ENCODE measurements at regions of chr13 and their contacts with region 1.

Region 1: DNA sequence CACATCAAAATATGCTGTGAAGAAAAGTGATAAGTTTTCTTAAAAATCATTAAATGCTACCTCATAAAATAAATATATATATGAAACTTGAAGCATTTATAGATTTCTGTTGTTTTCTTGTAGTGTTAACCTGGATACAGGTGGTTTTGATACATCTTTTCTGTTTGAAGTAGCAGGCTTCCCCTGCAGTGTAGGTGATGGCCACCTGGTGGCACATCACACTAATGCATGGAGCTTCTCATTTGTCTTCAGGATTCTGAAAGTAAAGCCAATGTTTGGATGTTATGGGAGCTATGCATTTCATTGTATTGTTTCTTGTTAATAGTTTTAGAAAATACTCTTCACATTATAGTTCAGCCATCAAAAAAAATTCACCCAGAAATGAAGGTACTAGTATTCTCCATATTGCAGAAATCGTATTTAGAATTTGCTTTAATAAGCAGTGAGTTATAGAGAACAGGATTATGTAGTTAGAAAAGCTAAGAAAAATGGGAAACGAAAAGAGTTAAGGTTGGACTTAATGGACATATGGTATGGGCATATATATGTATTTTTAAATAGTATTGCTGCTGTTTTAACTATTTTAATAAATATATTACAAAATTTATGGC is 18.7 kb downstream of the GPR180 start:
- DNase-seq: peak; percentile 15
- ATAC-seq: peak; percentile 84
- H3K4me3 ChIP-seq: no peak overlapping the region
- H3K27ac ChIP-seq: no peak overlapping the region
- H3K4me1 ChIP-seq: no peaks in the 10 kb centered on the region
- H3K27me3 ChIP-seq: no peaks in the 10 kb centered on the region
- CTCF ChIP-seq: peak; percentile 41 to 79 (median 76); a peak in 5 of 6 replicates
- POLR2A ChIP-seq: no peak
- RAD21 ChIP-seq: peak; percentile 51

Region 2: GRCh38 chr13:93867481-93867880 is 752.9 kb before region 1 on chr13:
- CTCF ChIA-PET with region 1: no interaction called
- POLR2A ChIA-PET with region 1: no interaction called
- RAD21 ChIA-PET with region 1: no interaction called
- intact Hi-C with region 1: loop called (anchors 5 kb)
- DNase-seq: no peak
- ATAC-seq: no peak
- H3K4me3 ChIP-seq: no peak overlapping the region
- H3K27ac ChIP-seq: no peak overlapping the region
- H3K4me1 ChIP-seq: no peaks in the 10 kb centered on the region
- H3K27me3 ChIP-seq: no peaks in the 10 kb centered on the region
- CTCF ChIP-seq: no peak
- POLR2A ChIP-seq: no peak
- RAD21 ChIP-seq: no peak

Region 3: DNA sequence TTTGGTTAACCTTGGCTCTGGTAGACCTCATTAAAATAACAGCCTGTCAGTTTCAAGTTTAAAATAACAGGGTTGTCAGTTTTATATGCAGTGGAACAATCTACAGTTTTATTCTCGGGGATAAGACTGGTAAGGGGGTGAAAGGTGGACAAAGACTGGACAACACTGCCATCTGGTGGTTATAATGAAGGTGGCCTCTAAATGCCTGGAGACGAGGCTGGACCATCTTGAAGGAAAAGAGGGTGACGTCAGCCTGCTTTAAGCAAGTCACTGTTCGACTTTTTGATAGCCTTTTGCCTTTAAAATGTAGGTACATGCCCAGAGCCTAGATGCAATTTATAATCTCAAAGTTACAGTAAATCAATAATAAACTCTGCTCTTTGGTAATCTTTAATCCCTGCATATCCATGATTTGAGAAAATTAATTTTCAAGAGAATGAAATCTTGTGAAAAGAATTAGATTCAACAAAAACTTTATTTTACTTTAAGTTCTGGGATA is 257.9 kb before region 1 on chr13:
- CTCF ChIA-PET with region 1: interaction called, 7 read pairs
- POLR2A ChIA-PET with region 1: no interaction called
- RAD21 ChIA-PET with region 1: no interaction called
- intact Hi-C with region 1: loop called (anchors 2 kb)
- DNase-seq: peak; percentile 68
- ATAC-seq: peak; percentile 98
- H3K4me3 ChIP-seq: no peak overlapping the region
- H3K27ac ChIP-seq: no peak overlapping the region
- H3K4me1 ChIP-seq: no peaks in the 10 kb centered on the region
- H3K27me3 ChIP-seq: no peaks in the 10 kb centered on the region
- CTCF ChIP-seq: peak in 2 of 3 experiments; percentile 69 to 83; a peak in 4 of 6 replicates
- POLR2A ChIP-seq: no peak
- RAD21 ChIP-seq: peak; percentile 68

Region 4: GRCh38 chr13:94416454-94417080 is 203.8 kb before region 1 on chr13:
- CTCF ChIA-PET with region 1: interaction called, 10 read pairs
- POLR2A ChIA-PET with region 1: interaction called, 3 read pairs
- RAD21 ChIA-PET with region 1: no interaction called
- intact Hi-C with region 1: no loop called
- DNase-seq: peak; percentile 51
- ATAC-seq: peak; percentile 93
- H3K4me3 ChIP-seq: no peak overlapping the region
- H3K27ac ChIP-seq: no peak overlapping the region
- H3K4me1 ChIP-seq: no peaks in the 10 kb centered on the region
- H3K27me3 ChIP-seq: 0 out of 2 replicates have a peak, but pooled peaks cover 4% of the 10 kb centered on the region
- CTCF ChIP-seq: peak; percentile 17 to 82 (median 72); a peak in 5 of 6 replicates
- POLR2A ChIP-seq: no peak
- RAD21 ChIP-seq: peak; percentile 43

Region 5: DNA sequence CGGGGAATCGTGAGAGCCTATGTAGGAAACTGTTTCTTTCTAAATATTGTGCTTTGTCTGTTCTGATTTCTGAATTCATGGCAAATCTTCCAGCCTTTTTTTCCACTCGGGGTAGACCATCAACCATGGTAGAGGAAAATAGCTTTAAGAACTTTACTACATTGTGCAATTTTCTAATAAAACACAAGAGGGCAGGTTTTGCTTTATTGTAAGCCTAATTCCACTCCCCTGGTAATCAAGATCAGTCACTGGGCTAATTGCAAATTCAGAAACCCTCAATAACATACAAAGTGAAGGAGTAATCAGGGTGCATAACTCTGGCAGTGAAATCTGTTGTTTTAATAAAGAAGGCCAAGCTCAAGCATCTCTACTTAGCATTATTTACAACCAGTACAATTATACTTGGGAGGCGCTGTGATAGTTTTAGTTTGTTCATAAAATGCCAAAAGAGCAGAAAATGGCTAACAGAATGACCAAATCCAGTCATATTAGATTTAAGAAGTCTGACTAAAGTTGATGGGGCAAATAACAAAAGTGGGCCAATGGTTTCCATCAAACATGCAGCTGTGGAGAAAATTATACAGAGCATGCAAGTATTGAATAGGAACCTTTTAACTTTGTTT is 184.7 kb before region 1 on chr13:
- CTCF ChIA-PET with region 1: interaction called, 110 read pairs
- POLR2A ChIA-PET with region 1: no interaction called
- RAD21 ChIA-PET with region 1: interaction called, 5 to 7 read pairs
- intact Hi-C with region 1: loop called (anchors 1 kb)
- DNase-seq: peak; percentile 34
- ATAC-seq: peak; percentile 79
- H3K4me3 ChIP-seq: no peak overlapping the region
- H3K27ac ChIP-seq: no peak overlapping the region
- H3K4me1 ChIP-seq: no peaks in the 10 kb centered on the region
- H3K27me3 ChIP-seq: peaks cover 21% of the 10 kb centered on the region; the same call in 1 of the 2 replicates
- CTCF ChIP-seq: peak; percentile 38 to 67 (median 47); a peak in 5 of 6 replicates
- POLR2A ChIP-seq: no peak
- RAD21 ChIP-seq: peak; percentile 75

Measured in HCT116 (cell line).